ENCODE measurements at regions of chr15 and their contacts with region 1.

Region 1: GRCh38 chr15:68843425-68844311 is 23.0 kb upstream of the ANP32A start:
- DNase-seq: peak; percentile 52
- ATAC-seq: peak; percentile 77
- H3K4me3 Mint-ChIP-seq: peak overlapping the region; percentile 60
- H3K27ac Mint-ChIP-seq: no peak overlapping the region
- H3K4me1 Mint-ChIP-seq: peaks cover 15% of the 10 kb centered on the region
- H3K27me3 Mint-ChIP-seq: peaks cover 46% of the 10 kb centered on the region
- CTCF ChIP-seq: no peak

Region 2: DNA sequence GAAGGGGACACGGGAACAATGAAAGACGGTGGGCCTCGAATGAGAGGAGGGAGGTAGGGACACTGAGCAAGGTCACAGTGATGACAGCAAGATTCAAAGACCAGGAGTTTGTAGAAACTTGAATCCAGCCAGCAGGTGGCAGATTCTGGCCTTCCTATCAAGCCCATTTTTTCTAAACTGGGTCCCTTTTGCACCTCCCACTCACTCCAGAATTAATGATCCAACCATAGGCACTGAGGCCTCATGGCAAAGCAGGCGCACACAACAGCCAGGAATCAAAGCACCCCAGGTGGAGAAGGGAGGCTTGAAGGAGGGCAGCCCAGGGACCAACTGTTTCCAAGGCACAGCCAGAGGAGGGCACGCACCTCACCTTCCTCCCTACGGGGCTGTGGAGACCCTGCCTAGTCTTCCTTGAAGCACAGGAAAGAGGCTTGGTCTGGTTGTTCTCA is 113.2 kb before region 1 on chr15:
- CTCF ChIA-PET with region 1: no interaction called
- POLR2A ChIA-PET with region 1: no interaction called
- intact Hi-C with region 1: loop called (anchors 10 kb)
- DNase-seq: peak; percentile 38
- ATAC-seq: no peak
- H3K4me3 Mint-ChIP-seq: no peak overlapping the region
- H3K27ac Mint-ChIP-seq: no peak overlapping the region
- H3K4me1 Mint-ChIP-seq: peaks cover 3% of the 10 kb centered on the region
- H3K27me3 Mint-ChIP-seq: peaks cover 5% of the 10 kb centered on the region
- CTCF ChIP-seq: peak; percentile 52

Region 3: DNA sequence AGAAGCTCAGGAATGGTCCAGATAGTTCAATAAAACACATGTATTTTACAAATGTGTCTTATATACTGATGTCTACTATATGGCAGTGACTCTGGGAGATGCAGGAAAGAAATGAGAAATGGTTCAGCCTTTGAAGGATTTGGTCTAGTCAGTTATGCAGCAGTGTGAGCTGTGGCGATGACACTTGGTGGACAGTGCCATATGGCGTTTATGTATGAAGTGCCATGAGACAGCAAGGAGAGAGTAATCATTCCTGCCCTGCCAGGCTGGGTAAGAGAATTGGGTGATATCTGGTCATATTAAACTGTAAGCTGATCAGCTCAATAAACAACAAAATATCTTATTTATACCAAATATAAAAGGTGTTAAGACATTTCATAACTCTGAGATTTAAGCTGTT is 24.6 kb after region 1 on chr15:
- CTCF ChIA-PET with region 1: no interaction called
- POLR2A ChIA-PET with region 1: no interaction called
- intact Hi-C with region 1: no loop called
- DNase-seq: no peak
- ATAC-seq: no peak
- H3K4me3 Mint-ChIP-seq: no peak overlapping the region
- H3K27ac Mint-ChIP-seq: no peak overlapping the region
- H3K4me1 Mint-ChIP-seq: no peaks in the 10 kb centered on the region
- H3K27me3 Mint-ChIP-seq: peaks cover 3% of the 10 kb centered on the region
- CTCF ChIP-seq: no peak

Region 4: GRCh38 chr15:68934341-68934740 is 90.7 kb after region 1 on chr15:
- CTCF ChIA-PET with region 1: no interaction called
- POLR2A ChIA-PET with region 1: no interaction called
- intact Hi-C with region 1: no loop called
- DNase-seq: no peak
- ATAC-seq: no peak
- H3K4me3 Mint-ChIP-seq: no peak overlapping the region
- H3K27ac Mint-ChIP-seq: no peak overlapping the region
- H3K4me1 Mint-ChIP-seq: no peaks in the 10 kb centered on the region
- H3K27me3 Mint-ChIP-seq: peaks cover 8% of the 10 kb centered on the region
- CTCF ChIP-seq: no peak